Right cardiac atrium (tissue), 5 donors: ENCODE measurements at regions of chr9 and their contacts with region 1.

Region 1: DNA sequence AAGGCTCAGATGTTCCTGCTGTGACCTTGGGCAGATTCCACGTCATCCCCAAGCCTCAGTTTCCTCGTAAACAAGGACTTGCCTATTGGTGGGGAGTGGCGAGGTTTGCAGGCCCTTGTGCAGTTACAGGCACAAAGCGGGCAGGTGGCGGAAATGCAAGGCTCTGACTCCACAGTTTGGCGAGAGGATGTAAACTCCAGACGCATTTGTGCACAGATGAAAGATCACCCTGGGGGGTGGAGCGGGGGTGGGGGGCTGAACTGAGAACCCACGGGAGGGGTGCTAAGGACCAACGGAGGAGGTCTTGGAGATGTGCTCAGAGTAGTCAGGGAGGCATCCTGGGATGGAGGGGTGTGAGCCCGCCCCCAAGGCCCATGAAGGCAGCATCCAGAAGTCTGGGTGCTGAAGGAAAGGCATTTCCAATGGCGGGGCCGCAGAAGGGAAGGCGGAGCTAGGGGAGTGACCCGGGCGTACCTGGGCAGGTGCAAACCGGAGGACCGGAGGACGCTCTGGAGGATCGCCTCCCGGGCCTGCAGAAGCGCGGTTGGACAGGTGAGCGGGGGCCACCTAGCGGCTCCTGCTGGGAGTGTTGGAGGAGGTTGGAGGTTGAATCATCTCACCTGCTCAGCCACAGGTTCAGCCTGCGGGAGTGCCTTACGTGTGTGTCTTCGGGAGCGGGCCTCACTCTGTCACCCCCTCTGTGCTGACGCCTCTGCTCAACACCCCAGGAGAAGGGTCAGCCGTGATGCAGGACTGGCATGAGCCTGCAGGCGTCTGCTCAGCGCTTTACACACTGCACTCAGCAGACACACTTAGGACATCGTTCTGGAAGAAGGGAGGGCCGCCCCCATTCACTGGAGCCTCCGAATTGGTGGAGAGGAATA is 1.9 kb upstream of the FIBCD1 start:
- DNase-seq: peak; percentile 49 to 86 (median 85)
- ATAC-seq: peak; percentile 67 to 74
- H3K4me3 ChIP-seq: no peak overlapping the region
- H3K27ac ChIP-seq: no peak overlapping the region
- H3K4me1 ChIP-seq: peaks cover 3% of the 10 kb centered on the region
- H3K27me3 ChIP-seq: no peaks in the 10 kb centered on the region

Region 2: GRCh38 chr9:130707225-130707976 is 233.5 kb before region 1 on chr9:
- intact Hi-C with region 1: loop called (anchors 5 to 10 kb)
- DNase-seq: peak in 2 of 3 donors; percentile 71 to 84
- ATAC-seq: peak in 1 of 2 donors; percentile 36
- H3K4me3 ChIP-seq: no peak overlapping the region
- H3K27ac ChIP-seq: no peak overlapping the region
- H3K4me1 ChIP-seq: no peaks in the 10 kb centered on the region
- H3K27me3 ChIP-seq: no peaks in the 10 kb centered on the region

Region 3: GRCh38 chr9:130712564-130713285 is 228.2 kb before region 1 on chr9:
- intact Hi-C with region 1: loop called in 2 of 4 experiments (anchors 5 to 10 kb)
- DNase-seq: peak; percentile 99 to 100 (median 99)
- ATAC-seq: peak; percentile 98
- H3K4me3 ChIP-seq: peak overlapping the region; percentile 91
- H3K27ac ChIP-seq: peak overlapping the region; percentile 92
- H3K4me1 ChIP-seq: peaks cover 3% of the 10 kb centered on the region
- H3K27me3 ChIP-seq: no peaks in the 10 kb centered on the region